ENCODE measurements at regions of chr13 and their contacts with region 1.

Region 1: DNA sequence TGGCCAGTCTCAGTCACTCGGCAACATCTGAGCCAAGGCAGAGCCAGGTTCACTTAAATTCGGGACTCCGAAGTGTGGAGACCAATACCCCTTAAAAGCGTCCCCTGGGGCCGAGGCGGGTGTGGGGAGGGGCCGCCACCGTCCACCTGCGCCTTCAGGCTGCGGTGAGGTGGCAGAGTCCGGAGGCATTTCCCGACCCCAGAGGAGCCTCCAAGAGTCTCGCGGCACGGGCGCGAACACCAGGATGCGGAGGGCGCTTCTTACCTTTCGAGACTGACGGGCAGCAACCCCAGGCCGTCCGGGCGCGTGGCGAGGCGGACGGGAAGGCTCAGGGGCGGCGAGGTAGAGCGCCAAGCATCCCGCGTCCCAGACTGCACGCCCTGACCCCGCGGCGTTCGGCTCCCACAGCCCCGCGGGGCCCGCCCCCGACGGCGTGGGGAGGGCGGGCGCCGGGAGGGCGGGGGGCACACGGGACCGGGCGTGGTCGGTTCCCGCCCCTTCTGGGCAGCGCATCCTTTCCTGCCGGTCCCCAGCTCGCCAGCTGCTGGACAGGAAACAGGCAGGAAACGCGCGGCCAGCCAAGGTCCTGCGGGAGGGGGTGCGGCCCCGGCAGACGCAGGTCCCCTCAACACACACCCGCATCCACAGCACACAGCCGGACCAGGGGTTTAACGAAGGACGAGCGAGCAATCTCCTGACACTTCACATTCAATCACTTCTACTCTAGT is at the start of gene THSD1:
- DNase-seq: peak; percentile 44
- H3K4me3 Mint-ChIP-seq: peak within 1 kb of the TSS; percentile 86
- H3K27ac Mint-ChIP-seq: peak within 1 kb of the TSS; percentile 82
- H3K4me1 Mint-ChIP-seq: peaks cover 10% of the 10 kb centered on the region
- H3K27me3 Mint-ChIP-seq: no peaks in the 10 kb centered on the region
- CTCF ChIP-seq: no peak
- total RNA-seq, gene THSD1: 13.3 and 16.7 TPM in 2 replicates

Region 2: GRCh38 chr13:52348983-52349780 is 56.7 kb before region 1 on chr13:
- CTCF ChIA-PET with region 1: interaction called, 17 read pairs
- POLR2A ChIA-PET with region 1: interaction called, 73 read pairs
- intact Hi-C with region 1: loop called (anchors 2 kb)
- DNase-seq: peak; percentile 83
- H3K4me3 Mint-ChIP-seq: no peak overlapping the region
- H3K27ac Mint-ChIP-seq: peak overlapping the region; percentile 66
- H3K4me1 Mint-ChIP-seq: peaks cover 46% of the 10 kb centered on the region
- H3K27me3 Mint-ChIP-seq: no peaks in the 10 kb centered on the region
- CTCF ChIP-seq: no peak

Measured in MCF 10A (cell line).